ENCODE measurements at regions of chr11 and their contacts with region 1.

Region 1: DNA sequence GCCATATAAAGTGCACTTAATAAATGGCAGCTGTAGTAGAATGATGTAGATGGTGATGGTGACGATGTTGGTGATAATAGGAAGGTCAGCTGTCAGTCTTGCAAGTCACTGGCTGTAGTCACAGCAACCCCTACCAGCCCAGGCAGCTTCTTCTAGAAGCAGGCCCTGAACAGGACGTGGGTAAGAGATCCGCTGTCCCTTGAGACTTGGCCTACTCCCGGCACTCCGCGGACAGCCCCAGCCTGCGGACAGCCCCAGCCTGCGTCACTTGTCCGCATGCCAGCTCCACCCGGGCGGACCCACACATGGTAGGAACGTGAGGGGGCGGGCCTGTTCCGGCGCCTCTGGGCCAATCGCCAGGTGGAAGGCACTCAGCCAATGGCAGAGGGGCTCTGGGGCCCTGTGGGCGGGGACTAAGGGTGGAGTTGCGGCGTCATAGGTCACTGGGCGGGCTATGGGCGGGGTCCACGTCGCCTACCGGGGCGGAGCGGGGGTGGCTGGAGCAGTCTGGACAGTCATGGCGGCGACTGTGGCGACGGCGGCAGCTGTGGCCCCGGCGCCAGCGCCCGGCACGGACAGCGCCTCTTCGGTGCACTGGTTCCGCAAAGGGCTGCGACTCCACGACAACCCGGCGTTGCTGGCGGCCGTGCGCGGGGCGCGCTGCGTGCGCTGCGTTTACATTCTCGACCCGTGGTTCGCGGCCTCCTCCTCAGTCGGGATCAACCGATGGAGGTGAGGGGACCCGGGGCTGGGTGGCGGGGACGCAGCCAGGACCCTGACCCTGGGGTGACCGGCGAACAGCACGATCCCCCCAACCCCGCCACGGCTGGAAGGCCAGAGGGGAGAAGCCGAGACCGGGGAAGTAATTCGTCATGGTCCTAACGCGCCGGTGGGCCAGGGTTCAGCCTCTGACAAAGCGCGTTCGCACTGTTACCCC is at the start of gene CRY2:
- DNase-seq: peak; percentile 99
- ATAC-seq: peak; percentile 90
- H3K4me3 Mint-ChIP-seq: peak within 1 kb of the TSS; percentile 74
- H3K27ac Mint-ChIP-seq: peak within 1 kb of the TSS; percentile 58
- H3K4me1 Mint-ChIP-seq: peaks cover 53% of the 10 kb centered on the region
- H3K27me3 Mint-ChIP-seq: no peaks in the 10 kb centered on the region
- total RNA-seq, gene CRY2: 13.1 to 14.1 TPM

Region 2: DNA sequence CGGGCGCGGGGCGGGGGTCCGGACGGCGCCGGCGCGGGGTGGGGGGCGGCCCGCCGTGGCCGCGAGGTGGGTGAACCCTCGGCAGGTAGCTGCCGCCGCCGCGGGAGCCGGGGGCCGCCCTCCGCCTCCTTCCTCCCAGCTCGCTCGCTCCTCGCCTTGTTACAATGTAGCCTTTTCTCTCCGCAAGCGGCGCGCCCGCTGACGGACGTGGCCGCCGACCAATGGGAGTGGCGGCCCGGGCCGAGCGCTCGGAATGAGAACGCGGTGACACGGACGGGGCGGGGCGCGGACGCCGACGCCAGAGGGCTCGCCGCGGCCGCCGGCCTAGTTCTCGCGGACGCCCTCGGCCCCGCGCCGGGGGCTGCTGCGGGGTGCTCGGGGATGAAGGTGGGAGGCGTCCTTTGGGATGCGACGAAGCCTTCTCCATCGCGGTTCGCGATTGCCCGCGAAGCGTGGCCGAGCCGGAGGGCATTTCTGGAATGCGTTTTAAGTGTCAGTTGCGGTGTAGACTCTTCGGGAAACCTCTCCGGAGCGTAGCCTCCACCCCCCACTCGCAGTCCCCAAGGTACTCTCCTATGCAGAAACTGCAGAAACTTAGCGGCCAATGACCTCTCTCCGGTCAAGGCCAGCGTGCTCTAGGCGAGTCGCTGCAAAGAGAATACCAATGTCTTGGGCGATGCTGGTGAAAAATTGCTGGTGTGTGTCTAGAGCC is 700.1 kb before region 1 on chr11:
- CTCF ChIA-PET with region 1: no interaction called
- POLR2A ChIA-PET with region 1: no interaction called
- intact Hi-C with region 1: loop called in 1 of 2 experiments (anchors 1 kb)
- DNase-seq: peak; percentile 95
- ATAC-seq: peak; percentile 99
- H3K4me3 Mint-ChIP-seq: peak overlapping the region; percentile 81
- H3K27ac Mint-ChIP-seq: peak overlapping the region; percentile 74
- H3K4me1 Mint-ChIP-seq: peaks cover 19% of the 10 kb centered on the region
- H3K27me3 Mint-ChIP-seq: peaks cover 15% of the 10 kb centered on the region

Region 3: DNA sequence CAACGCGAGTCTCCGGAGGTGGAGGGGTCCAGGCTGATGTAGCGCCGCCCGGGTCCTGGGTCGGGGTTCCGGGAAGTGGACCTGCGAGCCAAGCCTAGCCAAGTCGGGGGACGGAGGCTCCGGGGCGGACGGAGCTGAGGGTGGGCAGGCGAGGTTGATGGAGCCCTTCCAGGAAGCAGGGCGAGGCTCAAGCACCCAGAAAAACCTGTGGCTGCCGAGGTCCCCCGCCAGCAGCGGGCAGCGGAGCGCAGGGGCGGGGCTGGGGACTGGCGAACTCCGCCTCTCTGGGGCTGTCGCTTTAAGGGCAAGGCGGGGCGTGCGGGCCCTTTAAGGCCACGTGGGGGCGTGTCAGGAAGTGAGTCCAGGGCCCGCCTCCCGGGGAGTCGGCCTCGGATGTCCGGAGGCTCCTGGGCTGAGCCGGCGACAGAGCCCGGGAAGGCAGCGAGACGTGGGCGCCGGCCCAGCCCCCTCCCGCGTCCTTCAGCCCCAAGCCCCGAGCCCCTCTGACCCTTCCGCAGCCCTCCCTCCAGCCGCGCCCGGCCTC is 42.4 kb before region 1 on chr11 and contains the start of gene SLC35C1:
- CTCF ChIA-PET with region 1: interaction called, 10 read pairs
- POLR2A ChIA-PET with region 1: no interaction called
- intact Hi-C with region 1: loop called (anchors 1 kb)
- DNase-seq: peak; percentile 98
- ATAC-seq: peak; percentile 97
- H3K4me3 Mint-ChIP-seq: peak within 1 kb of the TSS; percentile 91
- H3K27ac Mint-ChIP-seq: peak within 1 kb of the TSS; percentile 86
- H3K4me1 Mint-ChIP-seq: peaks cover 42% of the 10 kb centered on the region
- H3K27me3 Mint-ChIP-seq: no peaks in the 10 kb centered on the region
- total RNA-seq, gene SLC35C1: 9.6 to 9.8 TPM

Region 4: GRCh38 chr11:45899448-45900173 is 52.4 kb after region 1 on chr11:
- CTCF ChIA-PET with region 1: no interaction called
- POLR2A ChIA-PET with region 1: no interaction called
- intact Hi-C with region 1: loop called (anchors 1 to 5 kb)
- DNase-seq: peak; percentile 80
- ATAC-seq: peak; percentile 86
- H3K4me3 Mint-ChIP-seq: peak overlapping the region; percentile 40
- H3K27ac Mint-ChIP-seq: no peak overlapping the region
- H3K4me1 Mint-ChIP-seq: peaks cover 2% of the 10 kb centered on the region
- H3K27me3 Mint-ChIP-seq: peaks cover 26% of the 10 kb centered on the region

Region 5: DNA sequence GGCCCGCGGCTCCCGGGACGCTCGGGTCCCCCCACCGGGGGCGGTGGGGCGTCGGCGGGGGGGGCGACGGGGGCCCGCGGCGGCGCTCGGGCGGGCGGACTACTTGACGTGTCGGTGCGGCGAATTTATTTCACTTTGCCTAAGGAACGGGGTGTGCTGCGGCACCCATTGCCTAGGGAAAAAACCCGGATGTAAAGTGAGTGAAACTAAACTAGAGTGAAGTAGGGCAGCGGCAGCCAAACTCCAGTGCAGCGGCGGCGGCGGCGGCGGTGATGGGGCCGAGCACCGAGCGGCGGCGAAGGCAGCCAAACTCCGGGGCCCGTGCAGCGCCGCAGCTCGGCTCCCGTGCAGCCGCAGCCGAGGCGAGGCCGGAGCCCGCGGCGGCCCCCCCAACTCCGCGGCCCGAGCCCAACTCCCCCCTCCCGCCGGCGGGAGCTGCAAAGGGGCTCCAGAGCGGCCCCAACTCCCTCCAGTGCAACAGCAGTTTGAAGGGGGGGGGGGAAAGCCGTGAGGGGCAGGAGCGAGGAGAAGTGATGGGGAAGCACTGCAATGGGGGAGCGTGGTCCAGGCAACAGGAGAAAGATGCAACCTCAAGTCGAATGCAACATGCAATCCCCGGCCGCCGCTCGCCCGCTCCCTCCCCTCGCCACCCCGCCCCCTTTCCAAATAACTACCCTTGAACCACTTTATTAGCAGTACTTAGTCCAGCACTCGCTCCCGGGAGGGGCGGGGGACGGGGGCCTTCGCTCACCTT is 274.7 kb after region 1 on chr11:
- CTCF ChIA-PET with region 1: no interaction called
- POLR2A ChIA-PET with region 1: no interaction called
- intact Hi-C with region 1: loop called in 1 of 2 experiments (anchors 2 kb)
- DNase-seq: peak; percentile 83
- ATAC-seq: peak; percentile 39
- H3K4me3 Mint-ChIP-seq: peak overlapping the region; percentile 81
- H3K27ac Mint-ChIP-seq: peak overlapping the region; percentile 86
- H3K4me1 Mint-ChIP-seq: peaks cover 41% of the 10 kb centered on the region
- H3K27me3 Mint-ChIP-seq: no peaks in the 10 kb centered on the region

Region 6: GRCh38 chr11:47642099-47642855 is 1795.0 kb after region 1 on chr11 and contains the start of gene MTCH2:
- CTCF ChIA-PET with region 1: no interaction called
- POLR2A ChIA-PET with region 1: no interaction called
- intact Hi-C with region 1: loop called in 1 of 2 experiments (anchors 5 kb)
- DNase-seq: peak; percentile 98
- ATAC-seq: peak; percentile 94
- H3K4me3 Mint-ChIP-seq: peak within 1 kb of the TSS; percentile 99
- H3K27ac Mint-ChIP-seq: peak within 1 kb of the TSS; percentile 96
- H3K4me1 Mint-ChIP-seq: peaks cover 25% of the 10 kb centered on the region
- H3K27me3 Mint-ChIP-seq: no peaks in the 10 kb centered on the region
- total RNA-seq, gene MTCH2: 94.8 to 138 TPM

Measured in activated CD4-positive, alpha-beta T cell treated with anti-CD3 and anti-CD28 coated beads for 36 hours (primary cell).